Activated T-helper 2 cell treated with anti-CD3 and anti-CD28 coated beads, Interferon-gamma antibody, Interleukin-2, Interleukin-4, amounts not matched to agents 10 μg/mL and 5 μg/mL and 100 μg/mL, durations not matched to agents 14 hours and 24 hours and 36 hours (primary cell): ENCODE measurements at regions of chr10 and their contacts with region 1.

Region 1: DNA sequence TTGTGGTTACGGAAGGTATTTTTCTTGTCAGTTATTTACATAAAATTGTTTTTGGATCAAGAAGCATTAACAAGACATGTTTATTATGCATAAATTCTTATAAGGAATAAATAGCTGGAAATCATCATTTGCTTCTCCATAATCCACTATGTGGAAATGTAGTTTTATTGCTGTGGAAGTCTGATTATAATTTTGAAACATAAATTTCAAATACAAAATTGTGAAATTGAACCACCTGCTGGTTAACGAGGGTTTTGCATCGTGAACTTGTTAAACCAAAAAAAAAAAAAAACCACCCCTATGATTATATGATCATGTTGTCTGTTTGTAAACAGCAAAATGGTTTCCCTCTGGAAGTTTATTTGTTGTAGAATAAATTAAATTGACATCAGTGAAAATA is 25.9 kb downstream of the ABRAXAS2 start:
- DNase-seq: no peak
- H3K4me3 Mint-ChIP-seq: no peak overlapping the region
- H3K27ac Mint-ChIP-seq: no peak overlapping the region
- H3K4me1 Mint-ChIP-seq: no peaks in the 10 kb centered on the region
- H3K27me3 Mint-ChIP-seq: no peaks in the 10 kb centered on the region

Region 2: GRCh38 chr10:124530215-124530665 is 297.2 kb before region 1 on chr10:
- intact Hi-C with region 1: loop called (anchors 1 kb)
- DNase-seq: peak; percentile 76
- H3K4me3 Mint-ChIP-seq: no peak overlapping the region
- H3K27ac Mint-ChIP-seq: no peak overlapping the region
- H3K4me1 Mint-ChIP-seq: peaks cover 3% of the 10 kb centered on the region
- H3K27me3 Mint-ChIP-seq: peaks cover 12% of the 10 kb centered on the region

Region 3: DNA sequence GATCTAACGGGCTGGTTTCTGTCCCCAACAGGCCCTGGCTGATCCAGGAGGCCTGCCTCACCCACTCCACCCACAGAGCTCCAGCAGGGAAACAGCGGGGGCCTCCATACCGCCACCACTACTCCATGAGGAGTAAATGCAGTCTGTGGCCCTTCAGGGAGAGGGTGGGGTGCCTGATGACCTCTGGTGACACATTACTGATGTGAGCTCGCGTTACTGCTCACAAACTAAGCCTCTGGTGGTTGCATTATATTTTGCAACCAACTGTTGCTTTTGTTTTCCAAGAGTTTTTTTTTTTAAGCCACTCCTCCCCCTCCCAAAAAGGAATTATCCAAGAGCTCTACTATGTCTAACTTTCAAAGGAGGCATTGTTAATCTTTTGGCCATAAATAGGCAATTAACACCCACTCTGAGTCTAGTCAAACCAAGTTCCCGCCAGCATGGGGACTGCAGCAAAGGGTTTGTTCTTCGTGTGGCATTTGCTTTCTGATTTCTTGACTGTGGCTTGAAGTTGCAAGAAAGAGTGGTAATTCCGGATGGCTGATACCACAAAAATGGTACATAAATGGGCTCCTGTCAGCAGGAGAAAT is 155.9 kb before region 1 on chr10:
- intact Hi-C with region 1: no loop called
- DNase-seq: no peak
- H3K4me3 Mint-ChIP-seq: no peak overlapping the region
- H3K27ac Mint-ChIP-seq: no peak overlapping the region
- H3K4me1 Mint-ChIP-seq: peaks cover 12% of the 10 kb centered on the region
- H3K27me3 Mint-ChIP-seq: no peaks in the 10 kb centered on the region

Region 4: GRCh38 chr10:124756156-124756903 is 71.1 kb before region 1 on chr10:
- intact Hi-C with region 1: loop called (anchors 2 kb)
- DNase-seq: no peak
- H3K4me3 Mint-ChIP-seq: no peak overlapping the region
- H3K27ac Mint-ChIP-seq: no peak overlapping the region
- H3K4me1 Mint-ChIP-seq: no peaks in the 10 kb centered on the region
- H3K27me3 Mint-ChIP-seq: no peaks in the 10 kb centered on the region

Region 5: DNA sequence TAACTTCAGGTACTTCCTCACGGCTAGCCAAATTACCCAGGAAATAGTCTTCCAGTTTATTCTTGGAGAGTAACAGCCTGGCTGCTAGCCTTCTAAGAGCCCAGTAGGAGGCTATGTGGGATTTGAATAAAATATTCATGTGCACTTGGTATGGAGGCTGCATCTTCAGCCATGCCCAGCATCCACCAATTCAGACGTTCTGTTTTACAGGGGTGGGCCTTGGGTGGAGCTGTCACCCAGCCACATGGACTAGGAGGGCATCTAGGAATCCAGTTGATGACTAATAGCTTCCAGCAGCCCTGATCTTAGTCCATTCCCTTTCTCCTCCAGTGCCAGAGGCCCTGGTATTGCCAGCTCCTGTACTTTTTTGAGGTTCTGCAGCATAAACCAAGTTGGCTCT is 48.1 kb after region 1 on chr10:
- intact Hi-C with region 1: no loop called
- DNase-seq: no peak
- H3K4me3 Mint-ChIP-seq: no peak overlapping the region
- H3K27ac Mint-ChIP-seq: no peak overlapping the region
- H3K4me1 Mint-ChIP-seq: no peaks in the 10 kb centered on the region
- H3K27me3 Mint-ChIP-seq: no peaks in the 10 kb centered on the region

Region 6: DNA sequence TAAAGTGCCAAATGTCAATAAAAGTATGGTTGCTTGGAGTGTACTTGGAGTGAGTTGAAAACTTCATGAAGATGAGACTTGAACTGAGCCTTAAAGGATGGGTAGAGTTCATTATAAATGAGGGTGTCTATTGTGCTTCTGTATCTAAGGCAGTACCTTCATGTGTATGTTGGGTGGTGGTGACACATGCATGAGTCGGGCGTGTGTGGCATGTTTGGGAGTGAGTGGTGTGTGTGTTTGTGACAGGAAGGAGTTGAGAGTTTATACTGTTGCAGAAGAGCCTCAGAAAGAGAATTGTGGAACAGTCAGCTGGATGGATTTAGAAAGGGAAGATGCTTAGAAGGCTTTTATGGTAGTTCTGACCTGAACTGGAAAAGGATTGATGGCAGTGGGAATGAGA is 108.5 kb after region 1 on chr10:
- intact Hi-C with region 1: no loop called
- DNase-seq: no peak
- H3K4me3 Mint-ChIP-seq: no peak overlapping the region
- H3K27ac Mint-ChIP-seq: no peak overlapping the region
- H3K4me1 Mint-ChIP-seq: peaks cover 12% of the 10 kb centered on the region
- H3K27me3 Mint-ChIP-seq: no peaks in the 10 kb centered on the region

Region 7: GRCh38 chr10:124957409-124957947 is 130.0 kb after region 1 on chr10:
- intact Hi-C with region 1: no loop called
- DNase-seq: no peak
- H3K4me3 Mint-ChIP-seq: no peak overlapping the region
- H3K27ac Mint-ChIP-seq: no peak overlapping the region
- H3K4me1 Mint-ChIP-seq: peaks cover 12% of the 10 kb centered on the region
- H3K27me3 Mint-ChIP-seq: no peaks in the 10 kb centered on the region